IMR-90 (cell line): ENCODE measurements at regions of chr10 and their contacts with region 1.

Region 1: GRCh38 chr10:11793762-11794479 is 29.2 kb upstream of the PROSER2 start:
- DNase-seq: peak; percentile 80
- ATAC-seq: peak; percentile 85
- H3K4me3 ChIP-seq: no peak overlapping the region
- H3K27ac ChIP-seq: peak overlapping the region; percentile 13; the same call in 1 of the 2 replicates
- H3K4me1 ChIP-seq: peaks cover 7% of the 10 kb centered on the region
- H3K27me3 ChIP-seq: peaks cover 2% of the 10 kb centered on the region; the same call in 1 of the 2 replicates
- CTCF ChIP-seq: no peak
- POLR2A ChIP-seq: no peak
- RAD21 ChIP-seq: no peak

Region 2: DNA sequence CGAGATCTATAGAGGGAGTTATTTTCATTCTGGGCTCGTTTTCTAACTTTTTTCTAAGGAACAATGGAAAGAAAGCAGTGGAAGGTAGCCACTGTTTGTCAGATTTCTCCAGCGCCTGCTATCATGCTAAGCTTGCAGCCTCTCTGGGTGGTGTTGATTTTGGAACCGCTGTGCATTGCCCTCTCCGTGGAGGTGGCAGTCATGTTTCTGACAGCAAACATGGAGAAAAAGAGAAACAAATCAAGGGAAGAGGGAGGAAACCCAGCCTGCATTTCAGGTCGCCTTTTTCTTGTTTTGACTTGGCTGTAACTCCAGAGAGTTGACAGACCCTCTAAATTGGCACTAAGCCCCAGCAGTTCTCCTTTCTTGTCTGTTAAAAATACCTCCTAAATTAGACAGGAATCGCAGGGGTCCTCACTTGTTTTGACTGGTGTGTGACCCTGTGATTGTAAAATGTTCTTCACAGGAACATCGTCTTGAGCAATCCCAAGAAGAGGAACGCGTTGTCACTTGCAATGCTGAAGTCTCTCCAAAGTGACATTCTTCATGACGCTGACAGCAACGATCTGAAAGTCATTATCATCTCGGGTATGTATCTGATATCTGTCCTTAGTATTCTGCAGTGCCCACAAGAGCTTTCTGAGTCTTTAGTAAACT is 46.9 kb before region 1 on chr10:
- CTCF ChIA-PET with region 1: no interaction called
- POLR2A ChIA-PET with region 1: no interaction called
- dilution Hi-C with region 1: no loop called
- in situ Hi-C with region 1: no loop called
- intact Hi-C with region 1: no loop called
- DNase-seq: no peak
- ATAC-seq: no peak
- H3K4me3 ChIP-seq: no peak overlapping the region
- H3K27ac ChIP-seq: no peak overlapping the region
- H3K4me1 ChIP-seq: no peaks in the 10 kb centered on the region
- H3K27me3 ChIP-seq: no peaks in the 10 kb centered on the region
- CTCF ChIP-seq: no peak
- POLR2A ChIP-seq: no peak
- RAD21 ChIP-seq: no peak

Region 3: GRCh38 chr10:11810313-11810766 is 16.4 kb after region 1 on chr10:
- CTCF ChIA-PET with region 1: no interaction called
- POLR2A ChIA-PET with region 1: no interaction called
- dilution Hi-C with region 1: no loop called
- in situ Hi-C with region 1: no loop called
- intact Hi-C with region 1: loop called (anchors 2 kb)
- DNase-seq: peak; percentile 52
- ATAC-seq: peak; percentile 85
- H3K4me3 ChIP-seq: no peak overlapping the region
- H3K27ac ChIP-seq: peak overlapping the region; percentile 9; the same call in 1 of the 2 replicates
- H3K4me1 ChIP-seq: peaks cover 4% of the 10 kb centered on the region; the same call in 1 of the 2 replicates
- H3K27me3 ChIP-seq: peaks cover 3% of the 10 kb centered on the region; the same call in 1 of the 2 replicates
- CTCF ChIP-seq: no peak
- POLR2A ChIP-seq: no peak
- RAD21 ChIP-seq: no peak

Region 4: GRCh38 chr10:11823122-11823988 is 29.4 kb after region 1 on chr10 and contains the start of gene PROSER2:
- CTCF ChIA-PET with region 1: interaction called, 5 read pairs
- POLR2A ChIA-PET with region 1: interaction called, 3 read pairs
- dilution Hi-C with region 1: no loop called
- in situ Hi-C with region 1: no loop called
- intact Hi-C with region 1: loop called (anchors 5 kb)
- DNase-seq: peak; percentile 52
- ATAC-seq: peak; percentile 92
- H3K4me3 ChIP-seq: peak within 1 kb of the TSS; percentile 97
- H3K27ac ChIP-seq: no peak within 1 kb of the TSS; the same call in 1 of the 2 replicates
- H3K4me1 ChIP-seq: peaks cover 1% of the 10 kb centered on the region; the same call in 1 of the 2 replicates
- H3K27me3 ChIP-seq: no peaks in the 10 kb centered on the region
- CTCF ChIP-seq: no peak
- POLR2A ChIP-seq: no peak; the same call in 1 of the 2 replicates
- RAD21 ChIP-seq: no peak
- total RNA-seq, gene PROSER2: 1.4 TPM in 2 replicates

Region 5: DNA sequence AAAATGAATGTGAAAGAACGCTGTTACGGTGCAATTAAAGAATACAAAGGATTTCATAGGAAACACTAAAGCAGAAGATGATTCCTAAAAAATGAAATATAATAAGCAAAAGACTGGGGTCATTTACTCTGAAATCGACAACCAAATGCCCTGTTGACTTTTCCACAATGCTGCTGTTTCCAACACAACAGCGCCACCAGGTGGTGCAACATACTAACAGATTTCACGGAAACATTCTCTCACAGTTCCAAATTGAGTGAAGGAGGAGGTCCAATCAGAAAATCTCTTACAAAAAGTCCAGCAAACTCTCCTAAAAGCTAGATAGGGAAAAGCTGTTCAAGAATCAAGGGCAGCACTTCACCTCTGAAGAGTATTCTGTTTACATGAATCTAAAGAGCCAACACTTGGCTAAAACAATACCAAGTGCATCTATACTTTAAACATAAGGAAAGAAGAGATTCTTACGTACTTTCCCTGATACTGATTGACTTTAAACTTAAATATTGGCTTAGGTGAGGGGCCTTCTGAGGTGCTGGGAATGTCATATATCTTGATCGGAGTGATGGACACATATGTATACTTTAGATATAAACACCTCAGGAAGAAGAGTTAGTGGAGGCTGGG is 192.8 kb after region 1 on chr10:
- CTCF ChIA-PET with region 1: interaction called, 4 read pairs
- POLR2A ChIA-PET with region 1: no interaction called
- dilution Hi-C with region 1: no loop called
- in situ Hi-C with region 1: loop called (anchors 5 kb)
- intact Hi-C with region 1: no loop called
- DNase-seq: peak; percentile 84
- ATAC-seq: peak; percentile 89
- H3K4me3 ChIP-seq: no peak overlapping the region
- H3K27ac ChIP-seq: no peak overlapping the region
- H3K4me1 ChIP-seq: no peaks in the 10 kb centered on the region
- H3K27me3 ChIP-seq: no peaks in the 10 kb centered on the region
- CTCF ChIP-seq: peak; percentile 89
- POLR2A ChIP-seq: no peak
- RAD21 ChIP-seq: peak; percentile 86